Transverse colon (tissue), 4 donors: ENCODE measurements at regions of chr9 and their contacts with region 1.

Region 1: GRCh38 chr9:12702160-12702758 is 9.1 kb downstream of the TYRP1 start:
- DNase-seq: peak; percentile 16
- H3K4me3 ChIP-seq: no peak overlapping the region
- H3K27ac ChIP-seq: no peak overlapping the region
- H3K4me1 ChIP-seq: peaks cover 0 to 16% (median 0%) of the 10 kb centered on the region in 4 donors
- H3K27me3 ChIP-seq: no peaks in the 10 kb centered on the region
- CTCF ChIP-seq: peak; percentile 29 to 58 (median 54)
- EP300 ChIP-seq: no peak
- POLR2A ChIP-seq: no peak

Region 2: GRCh38 chr9:12511726-12512125 is 190.5 kb before region 1 on chr9:
- in situ Hi-C with region 1: no loop called
- intact Hi-C with region 1: loop called (anchors 5 kb)
- DNase-seq: no peak
- H3K4me3 ChIP-seq: no peak overlapping the region
- H3K27ac ChIP-seq: no peak overlapping the region
- H3K4me1 ChIP-seq: no peaks in the 10 kb centered on the region
- H3K27me3 ChIP-seq: no peaks in the 10 kb centered on the region
- CTCF ChIP-seq: no peak
- EP300 ChIP-seq: no peak
- POLR2A ChIP-seq: no peak

Region 3: GRCh38 chr9:12884737-12885414 is 182.6 kb after region 1 on chr9:
- in situ Hi-C with region 1: loop called in 1 of 4 experiments (anchors 25 kb)
- intact Hi-C with region 1: no loop called
- DNase-seq: no peak
- H3K4me3 ChIP-seq: no peak overlapping the region
- H3K27ac ChIP-seq: peak overlapping the region in 1 of 4 donors; percentile 10
- H3K4me1 ChIP-seq: peaks cover 0 to 22% (median 13%) of the 10 kb centered on the region in 4 donors
- H3K27me3 ChIP-seq: no peaks in the 10 kb centered on the region
- CTCF ChIP-seq: peak; percentile 51 to 79 (median 60)
- EP300 ChIP-seq: no peak
- POLR2A ChIP-seq: no peak

Region 4: GRCh38 chr9:13088720-13089427 is 386.6 kb after region 1 on chr9:
- in situ Hi-C with region 1: loop called in 1 of 4 experiments (anchors 25 kb)
- intact Hi-C with region 1: no loop called
- DNase-seq: peak; percentile 7
- H3K4me3 ChIP-seq: no peak overlapping the region
- H3K27ac ChIP-seq: no peak overlapping the region
- H3K4me1 ChIP-seq: peaks cover 0 to 3% (median 0%) of the 10 kb centered on the region in 4 donors
- H3K27me3 ChIP-seq: no peaks in the 10 kb centered on the region
- CTCF ChIP-seq: peak; percentile 57 to 78 (median 66)
- EP300 ChIP-seq: no peak
- POLR2A ChIP-seq: no peak